ENCODE measurements at regions of chr4 and their contacts with region 1.

Region 1: GRCh38 chr4:97197106-97197505 is 946.2 kb downstream of the STPG2 start:
- DNase-seq: no peak
- H3K4me3 ChIP-seq: no peak overlapping the region
- H3K27ac ChIP-seq: no peak overlapping the region
- H3K4me1 ChIP-seq: no peaks in the 10 kb centered on the region
- H3K27me3 ChIP-seq: no peaks in the 10 kb centered on the region
- CTCF ChIP-seq: no peak

Region 2: GRCh38 chr4:96983830-96984229 is 213.3 kb before region 1 on chr4:
- CTCF ChIA-PET with region 1: no interaction called
- POLR2A ChIA-PET with region 1: no interaction called
- intact Hi-C with region 1: no loop called
- DNase-seq: no peak
- H3K4me3 ChIP-seq: no peak overlapping the region
- H3K27ac ChIP-seq: no peak overlapping the region
- H3K4me1 ChIP-seq: no peaks in the 10 kb centered on the region
- H3K27me3 ChIP-seq: no peaks in the 10 kb centered on the region
- CTCF ChIP-seq: no peak

Region 3: GRCh38 chr4:97498875-97499274 is 301.8 kb after region 1 on chr4:
- CTCF ChIA-PET with region 1: no interaction called
- POLR2A ChIA-PET with region 1: no interaction called
- intact Hi-C with region 1: loop called (anchors 5 kb)
- DNase-seq: no peak
- H3K4me3 ChIP-seq: no peak overlapping the region
- H3K27ac ChIP-seq: no peak overlapping the region
- H3K4me1 ChIP-seq: no peaks in the 10 kb centered on the region
- H3K27me3 ChIP-seq: no peaks in the 10 kb centered on the region
- CTCF ChIP-seq: no peak

Region 4: GRCh38 chr4:97670703-97671269 is 473.7 kb after region 1 on chr4:
- CTCF ChIA-PET with region 1: no interaction called
- POLR2A ChIA-PET with region 1: no interaction called
- intact Hi-C with region 1: no loop called
- DNase-seq: no peak
- H3K4me3 ChIP-seq: no peak overlapping the region
- H3K27ac ChIP-seq: no peak overlapping the region
- H3K4me1 ChIP-seq: no peaks in the 10 kb centered on the region
- H3K27me3 ChIP-seq: no peaks in the 10 kb centered on the region
- CTCF ChIP-seq: no peak

Measured in A673 (cell line).